Breast epithelium (tissue), 4 donors: ENCODE measurements at regions of chr14 and their contacts with region 1.

Region 1: GRCh38 chr14:29339494-29340172 is 573.0 kb downstream of the FOXG1 start:
- DNase-seq: no peak
- H3K4me3 ChIP-seq: no peak overlapping the region
- H3K27ac ChIP-seq: no peak overlapping the region
- H3K4me1 ChIP-seq: no peaks in the 10 kb centered on the region
- H3K27me3 ChIP-seq: no peaks in the 10 kb centered on the region
- CTCF ChIP-seq: no peak
- POLR2A ChIP-seq: no peak

Region 2: DNA sequence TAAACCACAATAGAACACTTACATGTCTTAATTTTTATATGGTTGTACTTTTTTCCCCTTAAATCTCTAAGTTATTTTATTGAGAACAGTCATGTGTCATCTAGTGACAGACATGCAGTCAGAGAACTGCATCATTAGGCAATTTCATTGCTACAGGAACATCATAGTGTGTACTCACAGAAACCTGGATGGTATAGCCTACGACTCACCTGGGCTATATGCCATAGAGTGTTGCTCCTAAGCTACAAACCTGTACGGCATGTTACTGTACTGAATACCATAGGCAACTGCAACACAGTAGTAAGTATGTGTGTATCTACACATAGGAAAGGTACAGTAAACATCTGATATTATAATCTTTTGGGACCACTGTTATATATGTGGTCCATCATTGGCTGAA is 30.4 kb after region 1 on chr14:
- intact Hi-C with region 1: no loop called
- DNase-seq: no peak
- H3K4me3 ChIP-seq: no peak overlapping the region
- H3K27ac ChIP-seq: no peak overlapping the region
- H3K4me1 ChIP-seq: no peaks in the 10 kb centered on the region
- H3K27me3 ChIP-seq: no peaks in the 10 kb centered on the region
- CTCF ChIP-seq: no peak
- POLR2A ChIP-seq: no peak

Region 3: GRCh38 chr14:30264161-30264560 is 924.5 kb after region 1 on chr14:
- intact Hi-C with region 1: loop called (anchors 5 kb)
- DNase-seq: no peak
- H3K4me3 ChIP-seq: no peak overlapping the region
- H3K27ac ChIP-seq: peak overlapping the region; percentile 33 to 76
- H3K4me1 ChIP-seq: no peaks in the 10 kb centered on the region
- H3K27me3 ChIP-seq: no peaks in the 10 kb centered on the region
- CTCF ChIP-seq: no peak
- POLR2A ChIP-seq: no peak